ENCODE measurements at regions of chr3 and their contacts with region 1.

Region 1: DNA sequence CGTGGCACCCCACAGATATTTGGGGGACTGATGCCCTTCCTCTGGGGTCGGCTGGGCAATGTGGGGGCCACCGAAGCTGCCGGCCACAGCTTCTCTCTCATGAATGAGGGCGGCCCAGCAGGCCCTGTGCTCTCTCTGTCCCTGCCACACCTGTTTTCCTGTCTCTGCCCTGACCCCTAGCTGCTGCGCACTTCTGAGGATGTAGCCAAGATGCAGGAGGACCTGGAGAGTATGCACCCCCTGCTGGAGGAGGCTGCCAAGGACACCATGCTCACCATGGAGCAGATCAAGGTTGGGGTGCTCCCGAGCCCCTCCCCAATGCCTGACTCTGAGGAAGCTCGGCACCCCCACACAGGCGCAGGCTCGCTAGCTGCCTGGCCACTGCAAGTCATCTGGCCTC is 59.7 kb downstream of the SEMA3G start:
- DNase-seq: peak; percentile 88
- ATAC-seq: peak; percentile 94
- H3K4me3 Mint-ChIP-seq: no peak overlapping the region
- H3K27ac Mint-ChIP-seq: peak overlapping the region; percentile 70; the same call in 1 of the 2 replicates
- H3K4me1 Mint-ChIP-seq: peaks cover 5% of the 10 kb centered on the region; the same call in 1 of the 2 replicates
- H3K27me3 Mint-ChIP-seq: no peaks in the 10 kb centered on the region
- CTCF ChIP-seq: peak; percentile 65

Region 2: GRCh38 chr3:52220380-52221026 is 164.7 kb before region 1 on chr3:
- CTCF ChIA-PET with region 1: interaction called, 73 read pairs
- POLR2A ChIA-PET with region 1: no interaction called
- DNase-seq: peak; percentile 92
- ATAC-seq: peak; percentile 84
- H3K4me3 Mint-ChIP-seq: no peak overlapping the region
- H3K27ac Mint-ChIP-seq: no peak overlapping the region
- H3K4me1 Mint-ChIP-seq: peaks cover 7% of the 10 kb centered on the region
- H3K27me3 Mint-ChIP-seq: no peaks in the 10 kb centered on the region
- CTCF ChIP-seq: peak; percentile 95

Region 3: DNA sequence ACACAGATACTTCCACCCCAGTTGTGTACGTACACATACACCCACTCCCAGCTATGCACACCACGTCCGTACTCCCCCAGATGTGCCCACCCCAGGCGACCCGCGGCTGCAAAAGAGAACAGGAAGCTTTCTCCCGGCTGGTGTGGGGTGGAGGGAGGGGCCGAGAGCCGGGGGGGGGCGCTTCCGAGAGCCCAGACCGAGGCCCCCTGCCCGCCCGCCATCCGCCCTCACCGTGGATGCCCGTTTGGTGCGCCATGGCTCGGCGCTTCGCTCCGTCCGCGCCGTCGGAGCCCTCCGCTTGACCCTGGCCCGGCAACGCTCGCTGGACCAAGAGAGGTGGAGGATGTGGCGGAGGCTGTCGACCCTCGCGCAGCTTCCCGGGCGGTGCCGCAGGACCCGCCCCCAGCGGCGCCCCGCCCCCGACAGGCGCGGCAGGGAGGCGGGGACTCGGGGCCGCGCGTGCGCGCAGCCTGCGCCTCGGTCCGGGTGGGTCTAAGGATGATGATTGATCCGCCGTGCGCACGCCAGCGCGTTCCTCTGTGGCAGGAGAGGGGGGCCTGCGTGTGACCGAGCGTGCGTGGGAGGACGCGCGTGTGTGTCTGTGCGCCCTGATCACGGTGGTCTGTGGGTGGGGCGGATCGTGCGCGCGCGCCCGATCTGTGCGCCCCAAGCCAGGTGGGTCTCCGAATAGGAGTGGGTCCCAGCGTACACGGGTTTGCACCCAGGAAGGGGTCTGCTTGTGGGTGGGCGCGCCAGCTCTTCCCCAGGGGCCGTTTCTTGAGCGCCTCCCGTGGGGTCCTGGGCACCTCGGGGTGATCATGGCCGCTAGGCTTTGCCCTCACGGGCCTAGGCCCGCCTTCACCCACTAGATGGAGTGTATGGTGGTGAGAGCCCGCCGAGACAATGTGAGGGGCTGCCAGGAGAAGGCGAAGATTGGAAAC is 146.1 kb before region 1 on chr3 and contains the start of gene TWF2:
- CTCF ChIA-PET with region 1: interaction called, 27 read pairs
- POLR2A ChIA-PET with region 1: no interaction called
- DNase-seq: peak; percentile 77
- ATAC-seq: peak; percentile 74
- H3K4me3 Mint-ChIP-seq: peak within 1 kb of the TSS; percentile 95
- H3K27ac Mint-ChIP-seq: peak within 1 kb of the TSS; percentile 89
- H3K4me1 Mint-ChIP-seq: peaks cover 43% of the 10 kb centered on the region
- H3K27me3 Mint-ChIP-seq: peaks cover 16% of the 10 kb centered on the region
- CTCF ChIP-seq: no peak
- total RNA-seq, gene TWF2: 60.8 to 71.1 TPM (median 66.3 TPM) in 3 replicates

Region 4: DNA sequence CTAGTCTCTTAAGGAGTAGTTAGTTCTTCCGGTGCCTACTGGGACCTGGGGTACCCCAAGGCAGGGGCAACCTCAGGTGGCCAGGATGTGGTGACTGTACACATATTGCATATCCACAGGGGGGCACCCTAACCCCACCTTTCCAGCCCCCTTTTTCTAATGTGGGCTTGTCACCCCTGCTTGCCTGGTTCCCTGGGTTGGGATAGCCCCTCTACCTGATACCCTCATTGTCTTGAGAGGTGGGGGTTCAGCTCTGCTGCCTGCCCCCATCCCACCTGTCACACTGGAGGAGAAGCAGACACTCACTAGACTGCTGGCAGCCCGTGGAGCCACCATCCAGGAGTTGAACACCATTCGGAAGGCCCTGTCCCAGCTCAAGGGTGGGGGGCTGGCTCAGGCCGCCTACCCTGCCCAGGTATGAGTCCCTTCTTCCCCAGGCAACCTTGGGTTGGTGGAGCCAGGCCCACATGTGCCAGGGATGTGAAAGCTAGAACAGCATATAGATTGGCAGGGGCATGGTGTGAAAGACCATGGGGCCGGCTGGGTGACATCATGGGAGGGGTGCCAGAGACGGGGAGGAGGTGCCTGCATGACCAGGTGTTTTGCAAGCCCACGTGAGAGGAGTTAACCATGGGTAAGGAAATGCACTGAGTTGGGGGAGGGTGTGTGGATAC is 93.5 kb before region 1 on chr3:
- CTCF ChIA-PET with region 1: interaction called, 74 read pairs
- POLR2A ChIA-PET with region 1: no interaction called
- DNase-seq: peak; percentile 69
- ATAC-seq: peak; percentile 10
- H3K4me3 Mint-ChIP-seq: no peak overlapping the region
- H3K27ac Mint-ChIP-seq: no peak overlapping the region; the same call in 1 of the 2 replicates
- H3K4me1 Mint-ChIP-seq: peaks cover 5% of the 10 kb centered on the region
- H3K27me3 Mint-ChIP-seq: no peaks in the 10 kb centered on the region
- CTCF ChIP-seq: peak; percentile 27; the same call in 1 of the 2 replicates

Region 5: DNA sequence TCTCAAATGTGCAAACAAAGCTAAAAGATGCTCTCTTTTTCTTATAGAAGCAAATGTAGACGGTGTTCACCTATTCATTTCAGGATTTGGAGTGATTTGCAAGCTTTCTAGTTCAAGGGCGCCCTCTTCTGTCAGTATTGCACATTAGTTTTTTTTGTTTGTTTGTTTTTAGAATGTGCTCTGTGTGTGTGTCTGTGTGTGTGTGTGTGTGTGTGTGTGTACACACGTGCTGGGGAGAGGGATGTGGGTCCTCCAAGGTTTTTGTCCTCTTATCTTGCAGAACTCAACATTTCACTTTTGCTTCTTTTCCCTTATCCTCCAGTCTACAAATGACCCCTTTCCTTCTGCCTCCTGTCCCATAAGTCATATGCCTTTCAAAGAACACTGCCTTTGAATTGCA is 45.5 kb before region 1 on chr3:
- CTCF ChIA-PET with region 1: interaction called, 45 read pairs
- POLR2A ChIA-PET with region 1: no interaction called
- DNase-seq: peak; percentile 35
- ATAC-seq: peak; percentile 58
- H3K4me3 Mint-ChIP-seq: no peak overlapping the region
- H3K27ac Mint-ChIP-seq: no peak overlapping the region
- H3K4me1 Mint-ChIP-seq: no peaks in the 10 kb centered on the region
- H3K27me3 Mint-ChIP-seq: no peaks in the 10 kb centered on the region; the same call in 1 of the 2 replicates
- CTCF ChIP-seq: peak; percentile 67

Region 6: DNA sequence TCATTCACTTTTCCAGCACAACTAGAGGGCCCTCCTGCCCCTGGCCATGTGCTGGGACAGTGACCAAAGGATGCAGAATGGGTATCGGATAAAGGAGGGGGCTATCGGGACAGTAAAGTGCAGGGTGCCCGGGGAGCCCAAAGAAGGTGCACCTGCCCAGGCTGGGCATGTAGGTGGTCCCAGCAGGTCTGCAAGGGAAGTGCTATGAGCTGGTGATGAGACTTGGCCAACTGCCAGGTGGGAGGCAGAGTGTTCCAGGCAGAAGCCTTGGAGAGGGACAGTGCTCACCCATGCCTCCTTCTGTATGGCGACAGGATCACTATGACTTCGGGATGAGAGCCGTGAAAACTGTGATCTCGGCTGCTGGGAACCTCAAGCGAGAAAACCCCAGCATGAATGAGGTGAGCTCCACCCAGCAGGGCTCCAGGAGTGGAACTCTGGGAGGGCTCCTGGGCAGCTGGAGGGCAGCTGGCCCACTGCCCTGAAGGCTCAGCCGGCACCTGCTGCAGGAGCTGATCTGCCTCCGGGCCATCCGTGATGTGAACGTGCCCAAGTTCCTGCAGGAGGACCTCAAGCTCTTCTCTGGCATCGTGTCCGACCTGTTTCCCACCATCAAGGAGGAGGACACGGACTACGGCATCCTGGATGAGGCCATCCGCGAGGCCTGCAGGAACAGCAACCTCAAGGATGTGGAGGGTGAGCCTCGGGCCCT is 20.7 kb before region 1 on chr3:
- CTCF ChIA-PET with region 1: interaction called, 31 read pairs
- POLR2A ChIA-PET with region 1: no interaction called
- DNase-seq: no peak
- ATAC-seq: no peak
- H3K4me3 Mint-ChIP-seq: no peak overlapping the region
- H3K27ac Mint-ChIP-seq: no peak overlapping the region
- H3K4me1 Mint-ChIP-seq: peaks cover 11% of the 10 kb centered on the region
- H3K27me3 Mint-ChIP-seq: no peaks in the 10 kb centered on the region
- CTCF ChIP-seq: no peak

Region 7: GRCh38 chr3:52403955-52404790 is 19.0 kb after region 1 on chr3:
- CTCF ChIA-PET with region 1: interaction called, 40 read pairs
- POLR2A ChIA-PET with region 1: interaction called, 4 read pairs
- DNase-seq: no peak
- ATAC-seq: no peak
- H3K4me3 Mint-ChIP-seq: no peak overlapping the region
- H3K27ac Mint-ChIP-seq: no peak overlapping the region
- H3K4me1 Mint-ChIP-seq: 0 out of 2 replicates have a peak, but pooled peaks cover 3% of the 10 kb centered on the region
- H3K27me3 Mint-ChIP-seq: no peaks in the 10 kb centered on the region
- CTCF ChIP-seq: no peak

Region 8: DNA sequence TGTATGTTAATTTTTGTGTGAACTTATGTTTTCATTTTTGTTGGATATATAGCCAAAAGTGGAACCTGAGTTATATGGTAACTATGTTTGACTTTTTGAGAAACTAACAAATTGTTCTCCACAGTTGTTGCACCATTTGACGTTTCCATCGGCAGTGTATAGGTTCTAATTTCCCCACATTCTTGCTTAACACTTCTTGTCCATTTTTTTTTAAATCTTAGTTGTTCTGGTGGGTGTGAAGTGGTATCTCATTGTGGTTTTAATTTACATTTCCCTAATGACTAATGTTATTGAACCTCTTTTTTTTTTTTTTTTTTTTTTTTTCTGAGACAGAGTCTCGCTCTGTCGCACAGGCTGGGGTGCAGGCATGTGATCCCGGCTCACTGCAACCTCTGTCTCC is 78.3 kb after region 1 on chr3:
- CTCF ChIA-PET with region 1: no interaction called
- POLR2A ChIA-PET with region 1: no interaction called
- DNase-seq: no peak
- ATAC-seq: no peak
- H3K4me3 Mint-ChIP-seq: no peak overlapping the region
- H3K27ac Mint-ChIP-seq: no peak overlapping the region
- H3K4me1 Mint-ChIP-seq: no peaks in the 10 kb centered on the region; the same call in 1 of the 2 replicates
- H3K27me3 Mint-ChIP-seq: no peaks in the 10 kb centered on the region
- CTCF ChIP-seq: no peak